ENCODE measurements at regions of chr7 and their contacts with region 1.

Region 1: DNA sequence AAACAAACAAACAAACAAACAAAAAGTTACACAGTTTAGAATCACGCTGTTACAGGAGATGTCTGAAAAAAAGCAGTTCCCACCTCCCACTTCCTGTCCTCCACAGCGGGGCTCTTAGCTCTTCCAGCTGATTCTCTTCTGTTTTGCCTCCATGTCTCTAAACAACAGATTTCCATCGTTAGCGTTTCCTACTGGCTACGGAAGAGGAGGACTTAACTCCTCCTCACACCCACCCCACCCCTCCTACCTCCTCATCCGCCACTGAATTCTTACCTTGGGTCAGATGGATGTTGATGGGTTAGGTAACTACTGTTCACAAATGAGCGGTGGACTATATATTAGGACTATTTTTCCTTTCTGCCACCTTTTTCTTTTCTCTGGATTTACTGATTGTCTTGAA is 36.8 kb upstream of the NUB1 start:
- DNase-seq: no peak
- H3K4me3 ChIP-seq: no peak overlapping the region
- H3K27ac ChIP-seq: no peak overlapping the region
- H3K4me1 ChIP-seq: peaks cover 3 to 9% of the 10 kb centered on the region in 2 donors
- H3K27me3 ChIP-seq: no peaks in the 10 kb centered on the region
- CTCF ChIP-seq: no peak
- POLR2A ChIP-seq: no peak

Region 2: GRCh38 chr7:150941981-150942590 is 362.8 kb before region 1 on chr7:
- intact Hi-C with region 1: no loop called
- DNase-seq: no peak
- H3K4me3 ChIP-seq: no peak overlapping the region
- H3K27ac ChIP-seq: no peak overlapping the region
- H3K4me1 ChIP-seq: peaks cover 0 to 9% of the 10 kb centered on the region in 2 donors
- H3K27me3 ChIP-seq: peaks cover under 1% of the 10 kb centered on the region
- CTCF ChIP-seq: no peak
- POLR2A ChIP-seq: no peak

Region 3: GRCh38 chr7:151123822-151124464 is 180.9 kb before region 1 on chr7:
- intact Hi-C with region 1: loop called (anchors 5 kb)
- DNase-seq: peak; percentile 90 to 93
- H3K4me3 ChIP-seq: no peak overlapping the region
- H3K27ac ChIP-seq: no peak overlapping the region
- H3K4me1 ChIP-seq: peaks cover 16% of the 10 kb centered on the region in 2 donors
- H3K27me3 ChIP-seq: no peaks in the 10 kb centered on the region
- CTCF ChIP-seq: peak; percentile 95 to 99 (median 98)
- POLR2A ChIP-seq: no peak

Region 4: GRCh38 chr7:151172273-151173141 is 132.3 kb before region 1 on chr7:
- intact Hi-C with region 1: loop called (anchors 10 kb)
- DNase-seq: peak; percentile 72 to 77
- H3K4me3 ChIP-seq: no peak overlapping the region
- H3K27ac ChIP-seq: no peak overlapping the region
- H3K4me1 ChIP-seq: peaks cover 0 to 9% of the 10 kb centered on the region in 2 donors
- H3K27me3 ChIP-seq: no peaks in the 10 kb centered on the region
- CTCF ChIP-seq: peak; percentile 1 to 100 (median 100)
- POLR2A ChIP-seq: no peak

Region 5: GRCh38 chr7:151244196-151244840 is 60.5 kb before region 1 on chr7:
- intact Hi-C with region 1: loop called (anchors 2 kb)
- DNase-seq: peak; percentile 36 to 37
- H3K4me3 ChIP-seq: peak overlapping the region in 1 of 3 donors; percentile 34
- H3K27ac ChIP-seq: no peak overlapping the region
- H3K4me1 ChIP-seq: peaks cover 26 to 51% of the 10 kb centered on the region in 2 donors
- H3K27me3 ChIP-seq: no peaks in the 10 kb centered on the region
- CTCF ChIP-seq: peak; percentile 26 to 87 (median 54)
- POLR2A ChIP-seq: no peak